Endothelial cell of umbilical vein (primary cell): ENCODE measurements at regions of chr3 and their contacts with region 1.

Region 1: GRCh38 chr3:166171695-166172094 is 334.5 kb upstream of the BCHE start:
- DNase-seq: no peak
- H3K4me3 ChIP-seq: no peak overlapping the region
- H3K27ac ChIP-seq: no peak overlapping the region
- H3K4me1 ChIP-seq: no peaks in the 10 kb centered on the region
- H3K27me3 ChIP-seq: no peaks in the 10 kb centered on the region
- CTCF ChIP-seq: no peak
- POLR2A ChIP-seq: no peak

Region 2: GRCh38 chr3:166085164-166085821 is 86.4 kb before region 1 on chr3:
- CTCF ChIA-PET with region 1: no interaction called
- POLR2A ChIA-PET with region 1: no interaction called
- dilution Hi-C with region 1: no loop called
- intact Hi-C with region 1: loop called (anchors 1 kb)
- DNase-seq: no peak
- H3K4me3 ChIP-seq: no peak overlapping the region
- H3K27ac ChIP-seq: no peak overlapping the region
- H3K4me1 ChIP-seq: no peaks in the 10 kb centered on the region
- H3K27me3 ChIP-seq: no peaks in the 10 kb centered on the region
- CTCF ChIP-seq: no peak
- POLR2A ChIP-seq: no peak

Region 3: DNA sequence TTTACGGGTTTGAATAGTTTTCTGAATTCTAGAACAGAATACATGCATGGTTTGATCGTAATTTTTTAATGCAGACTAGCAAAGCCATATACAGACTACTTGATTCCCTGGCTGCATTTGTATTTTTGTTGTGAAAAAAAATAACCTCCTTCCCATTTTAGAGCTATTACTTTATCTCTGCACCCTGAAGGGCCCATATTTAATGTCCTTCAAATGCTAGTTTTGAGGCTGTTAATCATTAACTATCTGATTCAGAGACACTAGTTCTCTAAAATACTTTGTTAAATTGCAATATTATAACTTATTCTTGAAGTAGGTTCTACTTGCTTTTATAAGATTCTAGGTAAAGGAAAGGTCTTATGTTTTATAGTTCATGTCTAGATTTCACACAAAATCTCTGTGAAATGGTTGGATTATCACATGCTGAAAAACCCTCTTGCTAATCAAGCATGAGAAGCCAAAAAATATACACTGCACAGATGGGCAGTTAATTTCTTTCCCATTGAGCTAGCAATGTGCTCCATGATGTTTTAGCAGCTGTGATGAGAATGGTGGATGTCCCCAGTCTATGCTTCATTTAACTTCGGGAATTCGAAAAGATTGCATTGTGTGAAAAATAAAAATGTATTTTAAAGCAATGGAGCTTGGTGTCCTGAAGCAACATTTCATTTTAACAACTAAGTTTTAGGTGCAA is 299.5 kb after region 1 on chr3:
- CTCF ChIA-PET with region 1: no interaction called
- POLR2A ChIA-PET with region 1: no interaction called
- dilution Hi-C with region 1: no loop called
- intact Hi-C with region 1: no loop called
- DNase-seq: no peak
- H3K4me3 ChIP-seq: no peak overlapping the region
- H3K27ac ChIP-seq: no peak overlapping the region
- H3K4me1 ChIP-seq: no peaks in the 10 kb centered on the region
- H3K27me3 ChIP-seq: no peaks in the 10 kb centered on the region
- CTCF ChIP-seq: no peak
- POLR2A ChIP-seq: no peak